ENCODE measurements at regions of chr3 and their contacts with region 1.

Region 1: GRCh38 chr3:36904641-36905040 is 40.2 kb downstream of the TRANK1 start:
- DNase-seq: no peak
- ATAC-seq: no peak
- H3K4me3 Mint-ChIP-seq: peak overlapping the region; percentile 55
- H3K27ac Mint-ChIP-seq: peak overlapping the region; percentile 74
- H3K4me1 Mint-ChIP-seq: peaks cover 88% of the 10 kb centered on the region
- H3K27me3 Mint-ChIP-seq: no peaks in the 10 kb centered on the region
- CTCF ChIP-seq: no peak

Region 2: GRCh38 chr3:36446276-36446675 is 458.4 kb before region 1 on chr3:
- CTCF ChIA-PET with region 1: no interaction called
- POLR2A ChIA-PET with region 1: no interaction called
- intact Hi-C with region 1: no loop called
- DNase-seq: no peak
- ATAC-seq: no peak
- H3K4me3 Mint-ChIP-seq: no peak overlapping the region
- H3K27ac Mint-ChIP-seq: no peak overlapping the region
- H3K4me1 Mint-ChIP-seq: no peaks in the 10 kb centered on the region
- H3K27me3 Mint-ChIP-seq: no peaks in the 10 kb centered on the region
- CTCF ChIP-seq: no peak

Region 3: GRCh38 chr3:36763850-36764703 is 140.6 kb before region 1 on chr3 and contains the start of gene DCLK3:
- CTCF ChIA-PET with region 1: no interaction called
- POLR2A ChIA-PET with region 1: no interaction called
- intact Hi-C with region 1: no loop called
- DNase-seq: no peak
- ATAC-seq: no peak
- H3K4me3 Mint-ChIP-seq: peak within 1 kb of the TSS; percentile 28
- H3K27ac Mint-ChIP-seq: no peak within 1 kb of the TSS
- H3K4me1 Mint-ChIP-seq: peaks cover 4% of the 10 kb centered on the region
- H3K27me3 Mint-ChIP-seq: peaks cover 66% of the 10 kb centered on the region
- CTCF ChIP-seq: no peak
- total RNA-seq, gene DCLK3: not detected in 2 replicates

Region 4: DNA sequence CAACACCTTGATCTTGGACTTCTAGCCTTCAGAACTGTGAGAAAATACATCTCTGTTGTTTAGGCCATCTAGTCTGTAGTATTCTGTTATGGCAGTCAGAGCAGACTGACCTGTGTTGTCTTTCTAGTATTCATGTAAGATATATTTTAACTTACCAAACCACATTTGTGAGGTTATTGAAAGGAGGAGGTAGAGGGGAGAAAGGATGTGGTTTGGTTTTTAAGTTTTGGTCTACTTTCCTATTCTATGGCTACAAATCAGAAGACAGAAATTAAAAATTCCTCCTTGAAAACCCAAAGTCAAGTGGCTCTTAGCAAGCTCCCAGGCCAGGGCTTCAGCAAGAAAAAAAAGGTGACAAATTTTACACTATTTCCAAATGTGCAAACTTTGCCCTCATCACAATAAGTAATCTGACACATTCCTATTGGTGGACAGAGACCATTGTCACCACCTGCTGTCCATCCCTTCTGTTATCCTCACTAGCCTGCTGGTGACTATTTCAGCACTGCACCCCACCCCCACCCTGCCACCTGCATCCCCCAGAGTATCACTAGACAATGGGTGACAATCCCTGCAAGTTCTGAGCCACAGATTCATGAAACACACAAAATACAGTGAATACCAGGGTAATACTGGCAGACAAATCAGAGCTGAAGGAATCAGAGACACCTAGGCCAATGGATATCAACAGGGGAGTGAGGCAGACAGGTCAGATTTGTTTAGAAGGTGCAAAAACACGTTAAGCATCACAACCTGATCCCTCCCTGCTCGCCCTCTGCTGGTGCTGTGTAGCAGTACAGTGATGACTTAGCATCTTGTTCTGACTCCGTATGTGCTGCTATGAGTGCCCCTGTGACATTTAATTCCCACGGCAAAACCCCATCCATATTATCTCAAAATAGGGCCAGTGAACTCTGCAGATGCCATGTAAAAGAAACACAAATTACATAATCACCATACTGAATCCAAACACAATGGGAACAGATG is 61.3 kb before region 1 on chr3:
- CTCF ChIA-PET with region 1: no interaction called
- POLR2A ChIA-PET with region 1: no interaction called
- intact Hi-C with region 1: no loop called
- DNase-seq: no peak
- ATAC-seq: peak; percentile 50
- H3K4me3 Mint-ChIP-seq: no peak overlapping the region
- H3K27ac Mint-ChIP-seq: peak overlapping the region; percentile 12
- H3K4me1 Mint-ChIP-seq: peaks cover 2% of the 10 kb centered on the region
- H3K27me3 Mint-ChIP-seq: no peaks in the 10 kb centered on the region
- CTCF ChIP-seq: no peak

Region 5: DNA sequence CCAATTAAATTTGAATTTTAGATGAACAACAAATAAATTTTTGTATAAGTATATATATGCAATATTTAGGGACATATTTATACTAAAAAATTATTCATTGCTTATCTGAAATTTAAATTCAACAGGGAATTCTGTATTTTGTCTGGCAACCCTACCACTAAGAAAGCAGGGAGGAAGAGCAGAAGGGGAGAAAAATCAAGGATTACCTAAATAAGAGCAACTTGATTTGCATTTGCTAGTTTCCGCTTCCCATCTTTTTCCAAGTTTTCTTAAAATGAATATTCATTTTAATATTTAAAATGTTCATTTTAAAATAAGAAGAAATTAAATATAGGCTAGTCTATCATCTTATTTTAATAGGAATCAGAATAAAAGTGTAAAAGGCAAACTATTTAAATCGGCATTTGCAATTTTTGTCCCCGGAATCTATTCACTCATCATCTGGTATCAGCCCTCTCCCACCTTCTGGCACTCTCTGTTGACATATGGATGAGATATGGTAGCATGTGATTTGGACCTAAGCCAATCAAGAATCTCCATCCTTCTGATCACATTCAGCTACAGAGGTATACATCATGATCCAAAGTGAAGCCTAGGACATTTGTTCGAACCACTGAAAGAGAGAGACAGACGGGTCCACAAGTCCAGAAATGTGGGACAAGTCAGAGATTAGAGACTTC is 42.4 kb before region 1 on chr3:
- CTCF ChIA-PET with region 1: no interaction called
- POLR2A ChIA-PET with region 1: no interaction called
- intact Hi-C with region 1: no loop called
- DNase-seq: no peak
- ATAC-seq: no peak
- H3K4me3 Mint-ChIP-seq: no peak overlapping the region
- H3K27ac Mint-ChIP-seq: no peak overlapping the region
- H3K4me1 Mint-ChIP-seq: peaks cover 8% of the 10 kb centered on the region
- H3K27me3 Mint-ChIP-seq: no peaks in the 10 kb centered on the region
- CTCF ChIP-seq: no peak

Region 6: DNA sequence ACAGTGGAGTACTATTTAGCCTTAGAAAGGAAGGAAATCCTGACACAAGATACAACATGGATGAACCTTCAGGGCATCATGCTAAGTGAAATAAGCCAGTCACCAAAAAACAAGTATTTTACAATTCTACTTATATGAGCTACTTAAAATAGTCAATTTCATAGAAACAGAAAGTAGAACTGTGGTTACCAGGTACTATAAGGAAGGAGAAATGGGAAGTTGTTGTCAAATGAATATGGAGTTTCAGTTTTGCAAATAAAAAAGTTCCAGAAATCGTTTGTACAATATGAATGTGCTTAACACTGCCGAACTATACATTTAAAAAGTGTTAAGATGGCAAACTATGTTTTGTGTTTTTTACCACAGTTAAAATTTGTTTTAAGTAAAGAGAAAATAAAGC is 13.4 kb after region 1 on chr3:
- CTCF ChIA-PET with region 1: interaction called, 4 read pairs
- POLR2A ChIA-PET with region 1: interaction called, 18 read pairs
- intact Hi-C with region 1: loop called (anchors 2 kb)
- DNase-seq: no peak
- ATAC-seq: peak; percentile 67
- H3K4me3 Mint-ChIP-seq: peak overlapping the region; percentile 83
- H3K27ac Mint-ChIP-seq: peak overlapping the region; percentile 91
- H3K4me1 Mint-ChIP-seq: peaks cover 62% of the 10 kb centered on the region
- H3K27me3 Mint-ChIP-seq: no peaks in the 10 kb centered on the region
- CTCF ChIP-seq: no peak

Region 7: GRCh38 chr3:36923523-36923943 is 18.9 kb after region 1 on chr3:
- CTCF ChIA-PET with region 1: interaction called, 11 read pairs
- POLR2A ChIA-PET with region 1: interaction called, 18 read pairs
- intact Hi-C with region 1: loop called (anchors 2 kb)
- DNase-seq: no peak
- ATAC-seq: no peak
- H3K4me3 Mint-ChIP-seq: peak overlapping the region; percentile 85
- H3K27ac Mint-ChIP-seq: peak overlapping the region; percentile 87
- H3K4me1 Mint-ChIP-seq: peaks cover 60% of the 10 kb centered on the region
- H3K27me3 Mint-ChIP-seq: no peaks in the 10 kb centered on the region
- CTCF ChIP-seq: no peak